Activated B cell treated with CpG ODN at 0.5 μM for 24 hours (primary cell): ENCODE measurements at regions of chr7 and their contacts with region 1.

Region 1: GRCh38 chr7:105487579-105488571 is 34.2 kb downstream of the PUS7 start:
- DNase-seq: no peak
- ATAC-seq: no peak
- H3K4me3 Mint-ChIP-seq: no peak overlapping the region
- H3K27ac Mint-ChIP-seq: no peak overlapping the region
- H3K4me1 Mint-ChIP-seq: peaks cover 5% of the 10 kb centered on the region
- H3K27me3 Mint-ChIP-seq: no peaks in the 10 kb centered on the region
- CTCF ChIP-seq: no peak

Region 2: DNA sequence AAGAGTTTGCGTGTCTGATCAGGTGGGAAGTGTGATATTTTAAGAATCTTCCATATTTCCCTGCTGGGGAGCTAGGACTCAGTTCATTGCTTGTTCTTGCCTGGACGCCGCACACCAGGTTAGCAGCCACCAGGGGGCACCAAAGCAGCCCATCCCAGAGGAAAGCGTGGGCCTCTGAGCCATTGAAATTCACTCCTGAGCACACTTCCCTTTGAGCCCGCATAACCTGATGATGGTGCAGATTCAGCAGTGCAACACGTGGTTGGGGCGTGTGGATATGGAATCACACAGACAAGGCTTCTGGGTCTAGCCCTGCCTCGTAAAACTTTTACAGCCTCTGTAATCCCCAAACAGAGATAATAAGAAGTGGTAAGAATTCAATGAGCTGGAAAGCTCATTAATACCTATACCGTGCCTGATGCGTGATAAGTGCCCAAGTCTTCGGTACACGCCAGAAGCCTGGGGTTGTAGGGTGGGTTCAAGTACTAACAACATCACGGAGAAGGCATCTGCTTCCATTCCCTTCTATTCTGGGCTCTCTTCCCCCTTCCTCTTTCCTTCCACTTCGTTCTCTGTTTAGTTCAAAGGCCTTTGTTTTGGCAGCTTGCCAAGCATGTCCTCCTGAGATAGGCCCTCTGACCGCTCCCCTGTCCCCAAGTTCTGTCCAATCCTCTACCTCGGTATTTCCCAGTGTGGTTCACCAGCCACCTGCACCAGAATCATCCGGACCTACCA is 604.0 kb before region 1 on chr7:
- CTCF ChIA-PET with region 1: no interaction called
- POLR2A ChIA-PET with region 1: no interaction called
- intact Hi-C with region 1: loop called (anchors 5 kb)
- DNase-seq: peak; percentile 57
- ATAC-seq: peak; percentile 84
- H3K4me3 Mint-ChIP-seq: no peak overlapping the region
- H3K27ac Mint-ChIP-seq: no peak overlapping the region
- H3K4me1 Mint-ChIP-seq: peaks cover 6% of the 10 kb centered on the region
- H3K27me3 Mint-ChIP-seq: peaks cover 1% of the 10 kb centered on the region
- CTCF ChIP-seq: peak; percentile 21

Region 3: GRCh38 chr7:105046414-105046813 is 441.5 kb before region 1 on chr7:
- CTCF ChIA-PET with region 1: no interaction called
- POLR2A ChIA-PET with region 1: no interaction called
- intact Hi-C with region 1: loop called (anchors 5 kb)
- DNase-seq: no peak
- ATAC-seq: no peak
- H3K4me3 Mint-ChIP-seq: no peak overlapping the region
- H3K27ac Mint-ChIP-seq: no peak overlapping the region
- H3K4me1 Mint-ChIP-seq: peaks cover 34% of the 10 kb centered on the region
- H3K27me3 Mint-ChIP-seq: no peaks in the 10 kb centered on the region
- CTCF ChIP-seq: no peak

Region 4: DNA sequence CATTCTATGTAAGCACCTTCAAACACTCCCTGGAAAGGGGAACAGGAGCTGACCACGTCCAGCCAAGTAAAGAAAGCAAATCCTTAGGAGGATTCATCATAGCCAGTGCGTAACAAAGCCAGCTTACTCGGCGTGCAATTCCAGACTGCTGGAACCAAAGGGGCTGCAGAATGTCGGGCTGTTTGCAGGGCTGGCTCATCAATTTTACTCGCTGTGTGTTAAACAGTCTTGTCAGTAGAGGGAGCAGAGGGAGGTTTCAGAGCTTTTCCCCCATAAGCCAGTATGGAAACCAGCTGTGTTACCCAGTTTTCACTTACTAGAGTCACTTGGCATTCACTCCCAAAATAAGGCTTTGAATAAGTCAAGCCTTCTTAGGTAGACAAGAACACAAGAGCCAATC is 346.8 kb before region 1 on chr7:
- CTCF ChIA-PET with region 1: no interaction called
- POLR2A ChIA-PET with region 1: no interaction called
- intact Hi-C with region 1: loop called (anchors 1 kb)
- DNase-seq: no peak
- ATAC-seq: no peak
- H3K4me3 Mint-ChIP-seq: no peak overlapping the region
- H3K27ac Mint-ChIP-seq: no peak overlapping the region
- H3K4me1 Mint-ChIP-seq: no peaks in the 10 kb centered on the region
- H3K27me3 Mint-ChIP-seq: no peaks in the 10 kb centered on the region
- CTCF ChIP-seq: no peak

Region 5: GRCh38 chr7:105153531-105153930 is 334.3 kb before region 1 on chr7:
- CTCF ChIA-PET with region 1: no interaction called
- POLR2A ChIA-PET with region 1: no interaction called
- intact Hi-C with region 1: loop called (anchors 1 kb)
- DNase-seq: no peak
- ATAC-seq: no peak
- H3K4me3 Mint-ChIP-seq: no peak overlapping the region
- H3K27ac Mint-ChIP-seq: peak overlapping the region; percentile 1
- H3K4me1 Mint-ChIP-seq: no peaks in the 10 kb centered on the region
- H3K27me3 Mint-ChIP-seq: no peaks in the 10 kb centered on the region
- CTCF ChIP-seq: no peak

Region 6: DNA sequence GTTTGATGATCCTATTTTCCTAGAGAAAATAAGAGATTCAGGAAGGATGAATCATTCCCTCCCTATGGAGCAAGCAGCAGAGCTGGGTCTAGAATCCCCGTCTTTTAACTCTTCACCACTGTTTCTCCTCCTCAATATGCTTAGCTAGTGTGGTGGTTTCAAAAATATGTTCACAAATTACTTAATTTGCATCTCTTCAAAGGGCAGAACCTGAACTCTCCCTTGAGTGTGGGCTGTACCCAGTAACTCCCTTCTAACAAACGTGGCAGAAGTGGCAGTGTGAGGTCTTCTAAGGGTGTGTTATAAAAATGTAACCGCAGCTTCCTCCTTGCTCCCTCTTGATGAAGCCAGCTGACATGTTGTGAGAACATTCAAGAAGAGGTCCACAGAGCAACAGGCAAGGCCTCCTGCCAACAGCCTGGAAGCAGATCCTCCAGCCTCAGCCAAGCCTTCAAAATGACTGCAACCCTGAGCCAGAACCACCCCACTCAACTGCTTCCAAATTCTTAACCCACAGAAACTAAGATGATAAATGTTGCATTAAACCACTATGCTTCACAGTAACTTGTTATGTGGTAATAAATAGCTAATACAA is 135.8 kb before region 1 on chr7:
- CTCF ChIA-PET with region 1: no interaction called
- POLR2A ChIA-PET with region 1: no interaction called
- intact Hi-C with region 1: no loop called
- DNase-seq: peak; percentile 40
- ATAC-seq: peak; percentile 88
- H3K4me3 Mint-ChIP-seq: peak overlapping the region; percentile 82
- H3K27ac Mint-ChIP-seq: peak overlapping the region; percentile 99
- H3K4me1 Mint-ChIP-seq: peaks cover 86% of the 10 kb centered on the region
- H3K27me3 Mint-ChIP-seq: no peaks in the 10 kb centered on the region
- CTCF ChIP-seq: no peak

Region 7: GRCh38 chr7:105512415-105512814 is 24.5 kb after region 1 on chr7:
- CTCF ChIA-PET with region 1: no interaction called
- POLR2A ChIA-PET with region 1: interaction called, 11 read pairs
- intact Hi-C with region 1: no loop called
- DNase-seq: no peak
- ATAC-seq: no peak
- H3K4me3 Mint-ChIP-seq: no peak overlapping the region
- H3K27ac Mint-ChIP-seq: no peak overlapping the region
- H3K4me1 Mint-ChIP-seq: no peaks in the 10 kb centered on the region
- H3K27me3 Mint-ChIP-seq: no peaks in the 10 kb centered on the region
- CTCF ChIP-seq: no peak

Region 8: GRCh38 chr7:105594034-105594433 is 106.2 kb after region 1 on chr7:
- CTCF ChIA-PET with region 1: no interaction called
- POLR2A ChIA-PET with region 1: no interaction called
- intact Hi-C with region 1: no loop called
- DNase-seq: no peak
- ATAC-seq: no peak
- H3K4me3 Mint-ChIP-seq: no peak overlapping the region
- H3K27ac Mint-ChIP-seq: no peak overlapping the region
- H3K4me1 Mint-ChIP-seq: peaks cover 13% of the 10 kb centered on the region
- H3K27me3 Mint-ChIP-seq: peaks cover 2% of the 10 kb centered on the region
- CTCF ChIP-seq: no peak

Region 9: GRCh38 chr7:105759670-105760550 is 272.0 kb after region 1 on chr7:
- CTCF ChIA-PET with region 1: no interaction called
- POLR2A ChIA-PET with region 1: no interaction called
- intact Hi-C with region 1: no loop called
- DNase-seq: no peak
- ATAC-seq: no peak
- H3K4me3 Mint-ChIP-seq: no peak overlapping the region
- H3K27ac Mint-ChIP-seq: no peak overlapping the region
- H3K4me1 Mint-ChIP-seq: peaks cover 1% of the 10 kb centered on the region
- H3K27me3 Mint-ChIP-seq: no peaks in the 10 kb centered on the region
- CTCF ChIP-seq: peak; percentile 67

Region 10: DNA sequence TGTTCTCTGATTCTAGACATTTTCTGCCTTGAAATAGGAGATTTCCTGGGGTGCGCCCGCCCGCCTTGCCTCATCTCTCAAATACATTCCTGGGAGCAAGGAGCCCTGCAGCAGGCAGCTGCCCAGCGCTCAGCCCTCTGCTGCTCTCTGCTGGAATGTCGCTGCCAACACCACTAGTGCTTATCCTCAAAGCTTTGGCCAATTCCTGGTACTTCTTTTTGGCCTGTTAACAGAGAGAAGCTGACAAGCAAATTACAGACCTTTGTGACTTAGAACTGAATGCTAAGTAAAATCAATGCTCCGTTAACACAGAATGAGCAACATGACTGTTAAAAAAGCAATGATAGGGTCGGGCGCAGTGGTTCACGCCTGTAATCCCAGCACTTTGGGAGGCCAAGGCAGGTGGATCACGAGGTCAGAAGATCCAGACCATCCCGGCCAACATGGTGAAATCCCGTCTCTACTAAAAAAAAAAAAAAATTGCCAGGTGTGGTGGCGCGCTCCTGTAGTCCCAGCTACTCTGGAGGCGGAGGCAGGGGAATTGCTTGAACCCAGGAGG is 666.1 kb after region 1 on chr7:
- CTCF ChIA-PET with region 1: no interaction called
- POLR2A ChIA-PET with region 1: no interaction called
- intact Hi-C with region 1: no loop called
- DNase-seq: peak; percentile 64
- ATAC-seq: peak; percentile 89
- H3K4me3 Mint-ChIP-seq: peak overlapping the region; percentile 72
- H3K27ac Mint-ChIP-seq: peak overlapping the region; percentile 19
- H3K4me1 Mint-ChIP-seq: peaks cover 52% of the 10 kb centered on the region
- H3K27me3 Mint-ChIP-seq: no peaks in the 10 kb centered on the region
- CTCF ChIP-seq: peak; percentile 66